IMR-90 (cell line): ENCODE measurements at regions of chr11 and their contacts with region 1.

Region 1: DNA sequence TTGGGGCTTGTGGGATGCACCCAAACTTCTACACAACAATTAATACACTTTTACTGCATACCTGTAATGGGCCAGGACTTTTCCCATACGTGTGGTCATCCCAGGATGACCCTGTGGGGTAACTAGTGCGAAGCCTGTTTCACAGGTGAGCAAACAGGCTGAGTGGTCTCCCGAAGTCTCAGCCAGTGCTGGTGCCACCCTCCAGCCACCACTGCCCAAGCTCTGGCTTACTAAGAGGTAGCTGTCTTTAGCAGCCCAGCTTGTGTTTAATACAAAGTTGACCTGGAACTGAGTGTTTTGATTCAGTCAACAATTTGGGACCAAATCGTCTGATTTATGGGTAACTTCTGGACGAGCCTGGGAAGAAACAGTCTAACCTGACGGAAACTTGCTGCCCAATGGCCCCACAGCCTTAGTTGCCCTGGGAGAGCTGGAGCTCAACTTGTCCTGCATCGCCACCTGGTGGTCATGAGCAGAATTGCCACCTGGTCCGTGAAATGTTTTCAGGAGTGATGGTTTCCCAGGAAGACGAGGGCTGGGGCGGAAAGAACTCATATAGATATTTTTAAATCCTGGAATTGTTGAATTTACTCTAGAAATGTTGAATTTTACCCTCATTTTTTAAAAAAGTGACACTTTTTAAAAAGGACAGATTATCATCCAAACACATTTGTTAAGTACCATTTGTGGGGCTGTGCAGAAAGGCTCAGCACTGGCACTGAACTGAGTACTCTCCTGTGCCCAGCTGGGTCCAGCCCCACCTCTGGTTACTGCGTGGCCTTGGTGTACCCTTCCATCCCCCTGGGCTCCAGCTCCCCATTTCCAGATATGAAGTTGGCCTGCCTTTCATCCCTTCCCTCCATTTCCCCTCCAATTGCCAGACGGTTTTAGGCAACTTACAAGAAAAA is 95.5 kb upstream of the PARVA start:
- DNase-seq: peak; percentile 82
- ATAC-seq: peak; percentile 55
- H3K4me3 ChIP-seq: no peak overlapping the region
- H3K27ac ChIP-seq: peak overlapping the region; percentile 38
- H3K4me1 ChIP-seq: peaks cover 23% of the 10 kb centered on the region
- H3K27me3 ChIP-seq: no peaks in the 10 kb centered on the region
- CTCF ChIP-seq: peak; percentile 97
- POLR2A ChIP-seq: peak; percentile 40; the same call in 1 of the 2 replicates
- RAD21 ChIP-seq: peak; percentile 98

Region 2: DNA sequence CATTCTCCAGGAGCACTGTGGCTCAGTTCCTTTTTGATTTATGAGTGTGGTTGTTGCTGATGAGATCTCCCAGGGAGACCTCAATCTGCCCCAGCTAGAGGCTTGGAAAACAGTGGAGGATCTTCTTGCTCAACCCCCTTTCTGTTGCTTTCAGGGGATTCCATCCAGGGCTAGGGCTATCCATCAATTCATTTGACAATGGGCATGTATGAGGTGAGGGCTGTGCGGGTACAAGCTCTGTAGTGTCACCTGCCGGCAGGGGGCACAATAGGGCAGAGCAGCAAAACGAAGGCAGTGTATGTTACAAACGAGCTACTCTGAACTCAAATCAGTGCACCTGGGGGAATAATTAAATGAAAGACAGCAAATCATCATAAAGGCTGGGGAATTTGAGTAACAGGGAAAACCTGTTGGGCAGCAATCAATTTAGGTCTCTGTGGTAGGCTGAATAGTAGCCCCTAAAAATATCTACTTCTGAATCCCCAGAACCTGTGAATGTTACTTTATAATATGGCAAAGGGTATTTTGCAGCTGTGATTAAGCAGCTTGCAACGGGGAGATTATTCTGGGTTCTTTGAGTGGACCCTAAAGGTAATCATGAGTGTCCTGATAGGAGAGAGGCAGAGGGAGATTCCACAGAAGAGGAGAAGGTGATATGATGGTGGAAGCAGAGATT is 1253.7 kb before region 1 on chr11:
- CTCF ChIA-PET with region 1: no interaction called
- POLR2A ChIA-PET with region 1: no interaction called
- dilution Hi-C with region 1: no loop called
- in situ Hi-C with region 1: loop called (anchors 25 kb)
- intact Hi-C with region 1: no loop called
- DNase-seq: peak; percentile 44
- ATAC-seq: peak; percentile 85
- H3K4me3 ChIP-seq: no peak overlapping the region
- H3K27ac ChIP-seq: no peak overlapping the region
- H3K4me1 ChIP-seq: peaks cover 3% of the 10 kb centered on the region; the same call in 1 of the 2 replicates
- H3K27me3 ChIP-seq: peaks cover 10% of the 10 kb centered on the region
- CTCF ChIP-seq: peak; percentile 72
- POLR2A ChIP-seq: no peak
- RAD21 ChIP-seq: peak; percentile 74

Region 3: DNA sequence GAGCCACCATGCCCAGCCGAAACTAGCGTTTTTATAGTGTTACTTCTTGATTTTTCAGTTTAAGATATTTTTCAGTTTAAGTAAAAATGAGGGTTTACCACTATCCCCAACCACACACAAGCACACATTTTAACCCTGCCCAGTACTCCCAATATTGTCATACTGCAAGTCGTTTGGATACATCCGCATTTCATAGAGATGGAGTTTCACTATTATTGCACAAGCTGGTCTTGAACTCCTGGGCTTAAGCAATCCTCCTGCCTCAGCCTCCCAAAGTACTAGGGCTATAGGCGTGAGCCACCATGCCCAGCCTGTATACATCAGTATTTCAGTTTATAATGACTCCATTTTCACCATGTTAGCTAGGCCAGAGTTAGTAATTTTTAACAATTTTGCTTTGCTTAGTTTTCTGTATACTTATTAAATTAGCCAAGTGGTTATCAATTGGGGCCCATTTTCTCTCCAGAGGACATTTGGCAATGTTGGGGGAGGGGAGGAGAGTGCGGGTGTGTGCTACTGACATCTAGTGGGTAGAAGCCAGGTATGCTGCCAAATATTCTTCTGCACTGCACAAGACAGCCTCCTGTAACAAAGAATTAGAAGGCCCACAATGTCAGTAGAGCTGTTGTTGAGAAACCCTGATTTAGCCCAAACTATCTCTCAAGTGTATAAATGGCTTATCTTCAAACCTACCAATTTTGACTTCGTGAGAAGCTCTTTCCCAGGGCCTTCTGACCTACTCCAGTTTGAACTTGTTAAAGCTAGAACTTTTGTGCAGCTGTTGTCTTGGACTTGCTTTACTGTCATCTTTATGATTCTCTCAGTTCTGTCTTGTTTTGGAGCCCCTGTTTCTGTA is 432.7 kb before region 1 on chr11:
- CTCF ChIA-PET with region 1: no interaction called
- POLR2A ChIA-PET with region 1: no interaction called
- dilution Hi-C with region 1: no loop called
- in situ Hi-C with region 1: no loop called
- intact Hi-C with region 1: loop called (anchors 5 kb)
- DNase-seq: peak; percentile 62
- ATAC-seq: no peak; the same call in 1 of the 2 replicates
- H3K4me3 ChIP-seq: no peak overlapping the region
- H3K27ac ChIP-seq: no peak overlapping the region
- H3K4me1 ChIP-seq: peaks cover 15% of the 10 kb centered on the region
- H3K27me3 ChIP-seq: no peaks in the 10 kb centered on the region
- CTCF ChIP-seq: peak; percentile 55
- POLR2A ChIP-seq: no peak
- RAD21 ChIP-seq: 0 out of 2 replicates have a peak, but pooled peaks have one; percentile 32

Region 4: GRCh38 chr11:11993839-11994238 is 288.0 kb before region 1 on chr11:
- CTCF ChIA-PET with region 1: interaction called, 3 read pairs
- POLR2A ChIA-PET with region 1: no interaction called
- dilution Hi-C with region 1: no loop called
- in situ Hi-C with region 1: no loop called
- intact Hi-C with region 1: loop called (anchors 5 kb)
- DNase-seq: peak; percentile 86
- ATAC-seq: peak; percentile 83
- H3K4me3 ChIP-seq: no peak overlapping the region
- H3K27ac ChIP-seq: peak overlapping the region; percentile 5; the same call in 1 of the 2 replicates
- H3K4me1 ChIP-seq: peaks cover 25% of the 10 kb centered on the region
- H3K27me3 ChIP-seq: no peaks in the 10 kb centered on the region
- CTCF ChIP-seq: no peak
- POLR2A ChIP-seq: no peak
- RAD21 ChIP-seq: no peak

Region 5: DNA sequence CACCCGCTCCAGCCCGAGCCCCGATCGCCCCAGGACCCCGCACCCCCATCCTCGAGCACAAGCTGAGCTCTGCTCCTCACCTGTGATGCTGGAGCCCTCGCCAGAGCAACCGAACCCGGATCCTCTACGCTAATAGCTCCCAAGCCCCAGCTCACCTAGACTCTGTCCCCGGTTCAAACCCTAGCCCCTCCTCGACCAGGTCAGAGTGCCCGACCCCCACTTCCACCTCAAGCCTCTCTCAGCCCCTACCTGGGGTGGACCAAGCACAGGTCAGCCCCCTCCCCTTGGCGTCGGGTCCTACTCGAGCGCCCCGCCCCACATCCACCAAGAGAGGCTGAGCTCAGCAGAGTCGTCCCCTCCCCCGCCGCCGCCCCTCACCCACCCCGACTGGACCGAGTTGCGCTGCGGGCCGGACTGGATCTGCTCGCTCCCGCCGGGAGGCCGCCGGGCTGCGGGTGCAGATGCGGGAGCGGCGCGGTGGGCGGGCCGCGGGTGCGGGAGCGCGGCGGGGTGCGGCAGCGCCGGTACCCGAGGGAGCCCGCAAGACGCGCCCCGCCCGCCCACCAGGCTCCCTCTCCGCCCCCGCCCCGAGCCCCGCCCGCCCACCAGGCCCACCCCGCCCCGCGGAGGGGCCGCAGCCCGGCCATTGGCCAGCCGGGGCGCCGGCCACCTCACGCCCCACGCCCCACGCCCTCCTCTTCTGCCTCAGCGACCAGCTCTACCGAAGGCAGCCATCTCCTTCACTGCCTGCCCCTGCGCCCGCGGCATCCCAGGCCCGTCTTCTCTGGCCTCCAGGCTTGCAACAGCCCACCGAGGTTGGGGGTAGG is 272.8 kb before region 1 on chr11:
- CTCF ChIA-PET with region 1: no interaction called
- POLR2A ChIA-PET with region 1: no interaction called
- dilution Hi-C with region 1: no loop called
- in situ Hi-C with region 1: no loop called
- intact Hi-C with region 1: no loop called
- DNase-seq: peak; percentile 46
- ATAC-seq: peak; percentile 89
- H3K4me3 ChIP-seq: peak overlapping the region; percentile 100
- H3K27ac ChIP-seq: peak overlapping the region; percentile 96
- H3K4me1 ChIP-seq: peaks cover 30% of the 10 kb centered on the region
- H3K27me3 ChIP-seq: no peaks in the 10 kb centered on the region
- CTCF ChIP-seq: no peak
- POLR2A ChIP-seq: no peak
- RAD21 ChIP-seq: no peak

Region 6: DNA sequence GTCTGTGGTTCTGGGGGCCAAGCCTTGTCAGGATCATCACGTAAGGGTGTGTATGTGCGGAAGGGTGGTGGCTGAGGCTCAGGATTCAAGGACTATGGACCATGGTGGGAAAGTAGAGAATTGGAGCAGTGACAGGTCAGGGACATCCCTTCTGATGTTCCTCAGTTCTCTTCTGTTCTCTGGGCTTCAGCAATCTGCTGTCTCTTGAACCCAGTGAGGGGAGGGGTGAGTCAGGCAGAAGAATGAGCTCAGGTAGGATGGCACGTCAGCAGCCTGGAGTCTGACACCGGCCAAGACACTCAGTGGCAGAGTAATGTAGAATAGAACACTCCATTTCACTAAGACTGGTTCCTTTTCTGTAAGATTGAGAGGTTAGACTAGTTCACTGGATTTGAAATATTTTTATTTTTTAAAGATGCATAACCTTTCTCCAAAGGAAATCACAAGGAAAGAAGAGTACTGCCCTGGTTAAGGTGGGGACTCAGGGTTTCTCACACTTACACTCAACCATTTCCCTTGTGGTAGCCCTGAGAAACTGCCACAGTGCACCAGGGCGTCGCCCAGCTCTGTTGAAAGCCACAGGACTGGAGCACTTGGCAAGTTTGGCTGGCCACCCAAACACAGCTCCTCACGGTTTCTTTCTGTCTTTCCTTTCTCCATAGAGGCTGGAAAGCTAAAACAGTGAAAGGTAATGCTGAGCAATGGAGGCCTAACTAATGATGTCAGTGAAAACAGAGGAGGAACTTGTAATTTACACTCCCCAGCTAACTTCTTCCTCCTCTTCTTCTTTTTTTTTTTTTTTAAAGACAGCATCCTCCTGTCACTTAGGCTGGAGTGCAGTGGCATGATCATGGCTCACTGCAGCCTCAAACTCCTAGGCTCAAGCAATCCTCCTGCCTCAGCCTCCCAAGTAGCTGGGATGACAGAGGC is 194.5 kb before region 1 on chr11:
- CTCF ChIA-PET with region 1: interaction called, 17 read pairs
- POLR2A ChIA-PET with region 1: interaction called, 12 read pairs
- dilution Hi-C with region 1: no loop called
- in situ Hi-C with region 1: no loop called
- intact Hi-C with region 1: loop called (anchors 1 kb)
- DNase-seq: peak; percentile 78
- ATAC-seq: peak; percentile 5; the same call in 1 of the 2 replicates
- H3K4me3 ChIP-seq: peak overlapping the region; percentile 46; the same call in 1 of the 2 replicates
- H3K27ac ChIP-seq: peak overlapping the region; percentile 97
- H3K4me1 ChIP-seq: peaks cover 36% of the 10 kb centered on the region
- H3K27me3 ChIP-seq: no peaks in the 10 kb centered on the region
- CTCF ChIP-seq: 0 out of 2 replicates have a peak, but pooled peaks have one; percentile 24
- POLR2A ChIP-seq: peak; percentile 81; the same call in 1 of the 2 replicates
- RAD21 ChIP-seq: no peak

Region 7: GRCh38 chr11:12159351-12160099 is 122.3 kb before region 1 on chr11:
- CTCF ChIA-PET with region 1: no interaction called
- POLR2A ChIA-PET with region 1: interaction called, 3 read pairs
- dilution Hi-C with region 1: no loop called
- in situ Hi-C with region 1: no loop called
- intact Hi-C with region 1: loop called (anchors 5 kb)
- DNase-seq: peak; percentile 97
- ATAC-seq: peak; percentile 82
- H3K4me3 ChIP-seq: no peak overlapping the region
- H3K27ac ChIP-seq: peak overlapping the region; percentile 83
- H3K4me1 ChIP-seq: peaks cover 53% of the 10 kb centered on the region
- H3K27me3 ChIP-seq: no peaks in the 10 kb centered on the region
- CTCF ChIP-seq: peak; percentile 32; the same call in 1 of the 2 replicates
- POLR2A ChIP-seq: peak; percentile 76
- RAD21 ChIP-seq: peak; percentile 55